ENCODE measurements at regions of chr5 and their contacts with region 1.

Region 1: DNA sequence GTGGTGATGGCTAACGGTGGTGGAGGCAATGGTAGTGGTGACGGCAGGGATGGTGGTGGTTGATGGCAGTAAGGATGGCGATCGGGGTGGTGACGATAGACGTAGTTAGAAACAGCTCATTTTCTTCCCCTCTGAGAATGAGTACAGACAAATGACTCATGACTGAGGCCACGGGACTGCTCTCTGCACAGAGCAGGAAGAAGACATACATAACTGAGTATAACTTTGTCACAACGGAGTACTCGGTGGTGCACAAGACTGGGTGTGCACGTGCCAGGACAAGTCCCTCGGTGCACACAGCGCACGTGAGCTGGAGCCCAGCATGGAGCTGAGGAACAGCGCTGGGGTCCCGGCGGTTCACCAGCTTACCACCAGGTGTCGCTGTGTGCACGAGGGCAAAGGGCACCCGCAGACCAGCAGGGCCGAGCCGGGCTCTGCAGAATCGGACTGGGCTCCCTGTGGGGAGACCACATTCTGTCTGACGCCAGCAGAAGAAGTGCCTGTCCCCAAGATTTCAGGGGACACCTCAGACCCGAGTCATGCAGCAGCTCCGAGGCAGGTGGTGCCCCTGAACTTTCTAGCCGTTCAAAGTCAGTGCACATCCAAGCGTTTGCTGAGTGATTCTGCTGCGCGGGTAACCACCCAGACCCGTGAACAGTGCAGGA is 188.6 kb downstream of the FSTL4 start:
- DNase-seq: peak; percentile 47 to 57 (median 53)
- H3K4me3 ChIP-seq: no peak overlapping the region
- H3K4me3 Mint-ChIP-seq: peak overlapping the region in 1 of 8 donors; percentile 29
- H3K27ac ChIP-seq: no peak overlapping the region
- H3K27ac Mint-ChIP-seq: no peak overlapping the region
- H3K4me1 ChIP-seq: peaks cover 8% of the 10 kb centered on the region
- H3K4me1 Mint-ChIP-seq: peaks cover 6 to 9% (median 7%) of the 10 kb centered on the region in 4 donors
- H3K27me3 ChIP-seq: no peaks in the 10 kb centered on the region
- H3K27me3 Mint-ChIP-seq: peaks cover 7 to 10% of the 10 kb centered on the region in 2 donors

Region 2: DNA sequence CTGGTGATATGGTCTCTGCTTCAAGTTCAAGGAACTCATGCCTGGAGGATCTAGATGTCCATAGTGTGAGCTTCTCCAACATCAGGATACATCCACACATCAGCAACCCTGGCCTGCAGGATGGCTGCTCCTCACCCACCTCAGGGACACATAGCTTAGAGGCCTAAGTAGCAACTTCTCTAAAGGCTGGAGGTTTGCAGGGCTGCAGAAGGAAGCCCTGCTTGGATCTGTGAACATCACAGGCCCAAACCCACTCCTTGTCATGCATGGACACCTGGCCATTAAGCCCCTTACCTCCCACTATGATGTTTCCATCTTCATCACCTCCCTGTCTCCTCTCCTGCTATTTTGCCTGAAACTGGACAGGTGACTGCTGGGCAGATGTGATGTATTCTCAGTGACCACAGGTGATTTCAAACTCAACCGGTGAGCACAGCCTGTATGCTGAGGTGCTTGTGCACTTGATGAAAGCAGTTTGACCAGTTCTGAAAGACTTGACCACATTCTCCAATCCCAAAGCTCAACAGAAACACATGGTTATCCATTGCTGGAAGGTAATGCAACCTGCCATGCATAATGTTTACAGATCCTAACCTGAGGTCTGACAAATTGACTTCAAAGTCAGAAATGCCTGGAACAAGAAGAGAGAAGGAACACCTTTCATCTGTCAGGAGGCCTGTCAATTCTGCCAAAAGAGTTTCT is 16.6 kb before region 1 on chr5:
- CTCF ChIA-PET with region 1: interaction called, 10 read pairs
- POLR2A ChIA-PET with region 1: no interaction called
- intact Hi-C with region 1: no loop called
- DNase-seq: no peak
- H3K4me3 ChIP-seq: no peak overlapping the region
- H3K4me3 Mint-ChIP-seq: no peak overlapping the region
- H3K27ac ChIP-seq: no peak overlapping the region
- H3K27ac Mint-ChIP-seq: no peak overlapping the region
- H3K4me1 ChIP-seq: no peaks in the 10 kb centered on the region
- H3K4me1 Mint-ChIP-seq: no peaks in the 10 kb centered on the region
- H3K27me3 ChIP-seq: no peaks in the 10 kb centered on the region
- H3K27me3 Mint-ChIP-seq: peaks cover 4 to 17% of the 10 kb centered on the region in 2 donors

Region 3: DNA sequence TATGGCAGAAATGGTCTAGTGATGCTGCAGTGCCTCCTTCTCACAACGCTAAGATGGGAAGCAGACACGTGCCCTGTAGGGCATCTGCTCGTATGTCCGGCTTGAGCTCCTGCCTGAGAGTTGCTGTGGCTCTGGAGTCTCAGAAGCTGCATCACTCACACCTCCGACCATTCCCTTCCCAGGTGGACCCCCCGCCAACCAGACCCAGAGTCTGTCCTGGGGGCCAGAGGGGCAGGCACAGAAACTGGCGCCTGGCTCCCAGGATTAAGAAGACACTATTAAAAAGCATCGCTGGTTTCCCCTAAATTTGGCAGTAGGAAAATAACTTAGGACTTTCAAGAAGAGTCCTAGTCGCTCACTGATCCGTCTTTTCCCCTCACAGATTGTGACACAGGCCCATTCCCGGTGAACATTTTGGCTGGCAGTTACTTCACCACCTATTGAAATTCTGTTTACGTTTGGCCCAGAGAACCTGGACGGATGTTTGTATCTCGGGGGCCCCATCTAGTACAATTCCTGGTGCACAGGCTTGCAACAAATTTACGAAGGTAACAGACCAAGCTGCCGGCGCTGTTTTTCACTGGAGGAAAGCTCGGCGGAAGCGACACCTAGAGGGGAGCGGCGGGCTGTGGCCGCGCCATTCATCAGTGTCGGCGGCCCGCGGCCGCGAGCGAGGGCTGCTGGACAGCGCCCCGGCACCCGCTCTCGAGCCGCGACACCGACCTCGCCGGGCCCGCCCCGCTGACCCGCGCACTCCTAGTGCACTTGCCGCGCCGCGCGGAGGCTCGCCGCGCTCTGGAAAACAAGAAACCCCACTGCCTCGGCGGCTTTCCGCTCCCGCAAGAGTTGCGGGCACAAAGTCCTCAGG is 187.0 kb after region 1 on chr5:
- CTCF ChIA-PET with region 1: interaction called, 10 read pairs
- POLR2A ChIA-PET with region 1: no interaction called
- intact Hi-C with region 1: no loop called
- DNase-seq: peak in 4 of 5 donors; percentile 15 to 23 (median 20)
- H3K4me3 ChIP-seq: peak overlapping the region; percentile 17 to 27
- H3K4me3 Mint-ChIP-seq: peak overlapping the region; percentile 68 to 84 (median 76)
- H3K27ac ChIP-seq: no peak overlapping the region
- H3K27ac Mint-ChIP-seq: no peak overlapping the region
- H3K4me1 ChIP-seq: peaks cover 10% of the 10 kb centered on the region
- H3K4me1 Mint-ChIP-seq: peaks cover 5 to 23% (median 14%) of the 10 kb centered on the region in 4 donors
- H3K27me3 ChIP-seq: peaks cover 18% of the 10 kb centered on the region
- H3K27me3 Mint-ChIP-seq: peaks cover 33 to 44% of the 10 kb centered on the region in 2 donors

Region 4: DNA sequence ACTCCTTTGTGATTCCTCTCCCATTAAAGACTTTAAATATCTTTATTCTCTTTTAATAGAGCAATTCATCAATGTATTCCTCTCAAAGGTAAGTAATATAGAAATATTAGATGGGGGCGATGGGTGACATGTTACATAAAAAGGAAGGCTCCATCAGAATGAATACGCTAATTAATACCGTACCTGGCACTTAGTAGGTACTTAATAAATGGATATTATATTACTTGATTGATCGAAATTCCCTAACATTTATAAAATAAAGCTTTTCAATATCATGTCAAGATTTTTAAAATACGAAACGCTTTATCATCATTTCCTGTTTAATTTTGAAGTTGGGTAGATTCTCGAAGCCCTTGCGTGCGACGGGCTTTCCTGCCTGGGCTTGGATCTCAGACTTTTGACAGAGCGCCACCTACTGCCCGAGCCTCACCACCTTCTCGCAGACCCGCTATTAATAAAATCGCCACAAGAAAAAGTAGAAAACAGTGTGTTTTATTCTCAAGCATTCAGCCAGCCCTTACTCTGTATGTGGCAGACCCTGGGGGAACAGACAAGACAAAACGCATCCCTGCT is 445.3 kb after region 1 on chr5:
- CTCF ChIA-PET with region 1: interaction called, 43 read pairs
- POLR2A ChIA-PET with region 1: no interaction called
- intact Hi-C with region 1: no loop called
- DNase-seq: peak; percentile 46 to 58 (median 51)
- H3K4me3 ChIP-seq: no peak overlapping the region
- H3K4me3 Mint-ChIP-seq: peak overlapping the region in 1 of 8 donors; percentile 30
- H3K27ac ChIP-seq: no peak overlapping the region
- H3K27ac Mint-ChIP-seq: no peak overlapping the region
- H3K4me1 ChIP-seq: no peaks in the 10 kb centered on the region
- H3K4me1 Mint-ChIP-seq: peaks cover 0 to 3% (median under 1%) of the 10 kb centered on the region in 4 donors
- H3K27me3 ChIP-seq: no peaks in the 10 kb centered on the region
- H3K27me3 Mint-ChIP-seq: peaks cover 5 to 16% of the 10 kb centered on the region in 2 donors

Region 5: GRCh38 chr5:133944263-133945185 is 520.8 kb after region 1 on chr5:
- CTCF ChIA-PET with region 1: interaction called, 3 read pairs
- POLR2A ChIA-PET with region 1: no interaction called
- intact Hi-C with region 1: loop called (anchors 2 kb)
- DNase-seq: peak in 3 of 5 donors; percentile 14 to 19 (median 18)
- H3K4me3 ChIP-seq: no peak overlapping the region
- H3K4me3 Mint-ChIP-seq: no peak overlapping the region
- H3K27ac ChIP-seq: no peak overlapping the region
- H3K27ac Mint-ChIP-seq: no peak overlapping the region
- H3K4me1 ChIP-seq: no peaks in the 10 kb centered on the region
- H3K4me1 Mint-ChIP-seq: no peaks in the 10 kb centered on the region
- H3K27me3 ChIP-seq: no peaks in the 10 kb centered on the region
- H3K27me3 Mint-ChIP-seq: peaks cover 2 to 3% of the 10 kb centered on the region in 2 donors

Region 6: GRCh38 chr5:133977161-133977787 is 553.5 kb after region 1 on chr5:
- CTCF ChIA-PET with region 1: interaction called, 17 read pairs
- POLR2A ChIA-PET with region 1: no interaction called
- intact Hi-C with region 1: no loop called
- DNase-seq: no peak
- H3K4me3 ChIP-seq: no peak overlapping the region
- H3K4me3 Mint-ChIP-seq: no peak overlapping the region
- H3K27ac ChIP-seq: no peak overlapping the region
- H3K27ac Mint-ChIP-seq: peak overlapping the region in 5 of 7 donors; percentile 27 to 81 (median 59)
- H3K4me1 ChIP-seq: no peaks in the 10 kb centered on the region
- H3K4me1 Mint-ChIP-seq: peaks cover 0 to 6% (median 4%) of the 10 kb centered on the region in 4 donors
- H3K27me3 ChIP-seq: no peaks in the 10 kb centered on the region
- H3K27me3 Mint-ChIP-seq: no peaks in the 10 kb centered on the region